ENCODE measurements at regions of chr10 and their contacts with region 1.

Region 1: DNA sequence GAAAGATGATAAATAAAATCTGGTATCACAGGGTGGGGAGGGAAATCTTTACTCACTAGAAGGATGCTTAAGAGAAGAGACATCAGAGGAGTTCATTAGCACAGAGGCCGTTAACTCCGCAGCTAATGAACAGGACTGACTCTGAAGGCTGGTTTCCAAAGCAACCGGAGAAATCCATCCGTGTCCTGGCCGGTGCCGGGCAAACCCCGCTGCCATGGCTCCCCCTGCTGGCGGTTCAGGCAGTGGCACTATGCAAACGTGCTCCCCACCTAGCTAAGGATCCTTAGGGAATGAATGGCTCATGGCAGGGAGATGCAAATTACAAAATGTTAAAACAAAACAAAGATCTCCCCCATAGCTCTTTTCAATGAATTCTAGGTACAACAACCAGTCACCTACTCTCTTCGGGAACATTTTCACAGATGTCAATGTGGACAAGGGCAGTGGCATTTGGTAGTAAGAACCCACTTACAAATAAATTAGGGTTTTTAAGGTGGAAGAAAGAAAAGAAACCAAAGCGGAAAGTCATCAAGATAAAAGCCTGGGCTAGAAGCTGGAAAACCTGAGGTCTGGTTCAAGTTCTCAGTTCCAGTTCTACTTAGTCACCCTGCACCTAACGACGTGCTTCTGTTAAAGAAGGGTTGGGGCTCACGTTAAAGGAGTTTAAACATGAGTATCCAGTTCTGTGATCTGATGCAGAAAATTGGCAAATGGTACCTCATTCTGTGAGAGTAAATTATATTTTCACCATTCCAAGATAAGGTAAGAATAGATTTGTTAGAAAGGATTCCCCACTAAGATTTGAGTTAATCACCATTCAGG is 138.2 kb downstream of the SVIL start:
- DNase-seq: peak; percentile 64
- CTCF ChIP-seq: peak; percentile 89

Region 2: GRCh38 chr10:29377333-29377961 is 119.1 kb before region 1 on chr10:
- CTCF ChIA-PET with region 1: interaction called, 12 read pairs
- POLR2A ChIA-PET with region 1: no interaction called
- DNase-seq: peak; percentile 54
- CTCF ChIP-seq: peak; percentile 55

Region 3: GRCh38 chr10:29386342-29386999 is 110.1 kb before region 1 on chr10:
- CTCF ChIA-PET with region 1: interaction called, 19 read pairs
- POLR2A ChIA-PET with region 1: no interaction called
- DNase-seq: peak; percentile 39
- CTCF ChIP-seq: peak; percentile 66

Region 4: DNA sequence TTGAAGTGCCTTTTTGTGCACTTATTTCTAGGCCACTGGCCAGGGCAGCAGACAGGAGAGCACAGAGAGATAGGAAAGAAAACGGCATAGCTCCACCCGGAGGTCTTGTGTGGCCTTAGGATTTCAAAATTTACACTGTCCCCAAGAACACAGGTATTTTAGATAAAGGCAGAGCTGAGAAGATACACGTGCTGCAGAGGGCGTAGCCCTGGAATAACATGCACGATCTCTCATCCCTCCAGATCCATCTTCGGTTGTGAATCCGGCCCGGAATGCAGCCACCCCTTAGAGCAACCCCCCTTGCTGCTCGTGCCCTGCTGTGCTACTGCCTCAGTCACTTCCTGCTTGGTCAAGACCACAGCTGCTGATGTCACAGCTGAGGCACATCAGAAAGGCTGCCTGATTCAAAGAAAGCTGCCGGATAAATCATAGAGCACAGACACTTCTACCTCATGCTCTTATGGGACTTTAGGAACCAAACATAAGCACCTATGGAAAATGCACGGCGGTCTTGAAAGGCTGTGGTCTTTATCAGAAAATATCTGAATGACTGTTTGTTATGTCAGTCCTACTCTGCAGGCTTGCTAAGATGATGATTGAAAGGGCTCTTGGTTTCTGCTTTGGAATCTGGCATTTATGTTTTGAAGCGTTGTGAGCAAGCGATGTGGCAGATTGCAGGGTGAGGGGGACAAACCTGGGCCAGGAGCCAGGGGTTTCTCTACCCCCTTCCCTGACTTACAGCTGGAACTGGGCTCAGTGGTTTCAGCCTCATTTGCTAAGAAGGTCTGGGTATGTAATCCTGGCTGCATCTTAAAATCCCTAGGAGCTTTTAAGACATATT is 13.7 kb before region 1 on chr10:
- CTCF ChIA-PET with region 1: interaction called, 15 read pairs
- POLR2A ChIA-PET with region 1: no interaction called
- DNase-seq: no peak
- CTCF ChIP-seq: no peak

Region 5: GRCh38 chr10:29508554-29509244 is 12.1 kb after region 1 on chr10:
- CTCF ChIA-PET with region 1: interaction called, 15 read pairs
- POLR2A ChIA-PET with region 1: no interaction called
- DNase-seq: no peak
- CTCF ChIP-seq: no peak

Region 6: DNA sequence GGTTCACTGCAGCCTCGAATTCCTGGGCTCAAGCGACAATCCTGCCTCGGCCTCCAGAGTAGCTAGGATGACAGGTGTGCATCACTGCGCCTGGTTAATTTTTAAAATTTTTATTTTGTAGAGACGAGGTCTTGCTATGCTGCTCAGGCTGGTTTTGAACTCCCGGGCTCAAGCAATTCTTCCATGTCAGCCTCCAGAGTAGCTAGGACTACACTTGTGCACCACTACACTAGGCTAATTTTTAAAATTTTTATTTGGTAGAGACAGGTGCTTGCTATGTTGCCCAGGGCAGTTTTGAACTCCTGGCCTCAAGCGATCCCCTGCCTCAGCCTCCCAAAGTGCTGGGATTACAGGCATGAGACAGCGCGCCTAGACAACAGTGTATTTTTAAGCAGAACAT is 17.8 kb after region 1 on chr10:
- CTCF ChIA-PET with region 1: interaction called, 15 read pairs
- POLR2A ChIA-PET with region 1: no interaction called
- DNase-seq: no peak
- CTCF ChIP-seq: no peak

Measured in GM10248 (cell line).